Activated T-helper 1 cell treated with anti-CD3 and anti-CD28 coated beads, Interleukin-12 subunit alpha, Interleukin-12 subunit beta, Interleukin-2, Interleukin-4 antibody, amounts not matched to agents 30 ng/mL and 10 ng/mL and 1 ng/mL, durations not matched to agents 14 hours and 24 hours and 36 hours (primary cell): ENCODE measurements at regions of chr2 and their contacts with region 1.

Region 1: DNA sequence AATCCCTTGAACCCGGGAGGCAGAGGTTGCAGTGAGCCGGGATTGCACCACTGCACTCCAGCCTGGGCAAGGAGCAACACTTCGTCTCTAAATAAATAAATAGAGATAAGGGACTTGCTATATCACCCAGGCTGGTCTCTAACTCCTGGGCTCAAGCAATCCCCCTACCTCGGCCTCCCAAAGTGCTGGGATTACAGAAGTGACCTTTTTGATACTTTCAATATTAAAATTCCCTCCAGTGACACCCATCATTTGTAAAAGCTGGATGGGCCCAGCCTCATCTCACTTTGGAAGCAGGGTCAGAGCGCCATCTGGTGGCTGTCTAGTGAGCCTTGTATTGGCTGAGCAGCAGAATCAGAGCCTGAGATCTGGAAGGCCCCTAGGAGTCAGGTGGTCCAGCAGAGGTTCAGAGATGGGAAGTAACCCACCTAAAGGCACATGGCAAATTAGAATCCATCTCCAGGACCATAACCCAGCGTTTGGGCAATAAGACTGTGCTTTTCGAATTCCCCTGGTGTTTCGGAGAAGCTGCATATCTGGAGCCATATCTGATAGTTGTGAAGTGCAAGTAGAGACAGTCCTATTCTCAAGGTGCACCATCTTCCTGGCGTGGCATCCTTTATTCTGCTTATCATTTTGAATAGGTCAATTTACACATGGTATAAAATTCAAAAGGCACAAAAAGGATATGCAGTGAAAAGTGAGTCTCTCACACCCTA is 18.3 kb upstream of the SLC35F6 start:
- DNase-seq: peak; percentile 61
- H3K4me3 Mint-ChIP-seq: no peak overlapping the region
- H3K27ac Mint-ChIP-seq: no peak overlapping the region
- H3K4me1 Mint-ChIP-seq: no peaks in the 10 kb centered on the region
- H3K27me3 Mint-ChIP-seq: peaks cover 11% of the 10 kb centered on the region

Region 2: GRCh38 chr2:26503231-26503880 is 242.4 kb before region 1 on chr2:
- intact Hi-C with region 1: loop called (anchors 1 kb)
- DNase-seq: peak; percentile 83
- H3K4me3 Mint-ChIP-seq: peak overlapping the region; percentile 79
- H3K27ac Mint-ChIP-seq: peak overlapping the region; percentile 51
- H3K4me1 Mint-ChIP-seq: peaks cover 7% of the 10 kb centered on the region
- H3K27me3 Mint-ChIP-seq: peaks cover 5% of the 10 kb centered on the region

Region 3: DNA sequence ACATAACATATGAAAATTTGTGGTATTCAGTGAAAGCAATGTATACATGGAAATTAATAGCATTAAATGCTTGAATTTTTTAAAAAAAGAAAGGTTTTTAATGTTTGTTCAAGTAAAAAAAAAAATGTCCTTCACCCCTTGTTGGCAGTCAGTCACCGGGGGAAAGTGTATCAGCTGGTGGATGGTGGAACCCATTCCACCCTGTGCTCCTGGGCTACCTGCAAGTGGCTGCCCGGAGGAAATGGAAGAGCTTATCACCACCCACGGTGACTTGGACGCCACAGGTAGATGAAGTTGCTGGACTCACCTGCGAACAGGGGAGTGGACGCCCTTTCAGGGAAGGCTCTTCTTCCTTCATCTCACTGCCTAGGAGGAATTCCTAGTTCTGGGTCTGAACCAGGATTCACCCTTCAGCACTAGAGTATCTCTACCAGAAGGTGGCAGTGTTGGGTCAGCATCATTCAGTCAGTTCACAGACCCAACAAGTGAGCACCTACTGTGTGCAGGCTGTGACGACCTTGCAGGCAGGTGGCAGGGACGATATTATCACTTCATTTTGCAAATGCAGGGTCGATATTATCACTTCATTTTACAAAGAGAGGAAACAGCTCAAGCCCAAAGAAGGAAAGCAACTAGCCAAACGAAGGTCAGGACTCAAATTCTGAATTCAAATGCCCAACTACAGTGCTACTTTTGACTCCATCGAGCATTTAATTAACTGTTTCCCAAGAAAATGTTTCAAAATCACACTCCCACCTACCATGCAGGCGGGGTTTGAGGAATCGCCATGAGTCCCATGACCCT is 140.4 kb before region 1 on chr2:
- intact Hi-C with region 1: loop called (anchors 1 kb)
- DNase-seq: peak; percentile 21
- H3K4me3 Mint-ChIP-seq: no peak overlapping the region
- H3K27ac Mint-ChIP-seq: no peak overlapping the region
- H3K4me1 Mint-ChIP-seq: no peaks in the 10 kb centered on the region
- H3K27me3 Mint-ChIP-seq: peaks cover 31% of the 10 kb centered on the region

Region 4: GRCh38 chr2:26764078-26764887 is 18.5 kb after region 1 on chr2 and contains the start of gene SLC35F6:
- intact Hi-C with region 1: no loop called
- DNase-seq: peak; percentile 81
- H3K4me3 Mint-ChIP-seq: peak within 1 kb of the TSS; percentile 87
- H3K27ac Mint-ChIP-seq: peak within 1 kb of the TSS; percentile 85
- H3K4me1 Mint-ChIP-seq: peaks cover 34% of the 10 kb centered on the region
- H3K27me3 Mint-ChIP-seq: peaks cover 2% of the 10 kb centered on the region
- total RNA-seq, gene SLC35F6: 14.3 and 14.5 TPM in 2 replicates